ENCODE measurements at regions of chr19 and their contacts with region 1.

Region 1: DNA sequence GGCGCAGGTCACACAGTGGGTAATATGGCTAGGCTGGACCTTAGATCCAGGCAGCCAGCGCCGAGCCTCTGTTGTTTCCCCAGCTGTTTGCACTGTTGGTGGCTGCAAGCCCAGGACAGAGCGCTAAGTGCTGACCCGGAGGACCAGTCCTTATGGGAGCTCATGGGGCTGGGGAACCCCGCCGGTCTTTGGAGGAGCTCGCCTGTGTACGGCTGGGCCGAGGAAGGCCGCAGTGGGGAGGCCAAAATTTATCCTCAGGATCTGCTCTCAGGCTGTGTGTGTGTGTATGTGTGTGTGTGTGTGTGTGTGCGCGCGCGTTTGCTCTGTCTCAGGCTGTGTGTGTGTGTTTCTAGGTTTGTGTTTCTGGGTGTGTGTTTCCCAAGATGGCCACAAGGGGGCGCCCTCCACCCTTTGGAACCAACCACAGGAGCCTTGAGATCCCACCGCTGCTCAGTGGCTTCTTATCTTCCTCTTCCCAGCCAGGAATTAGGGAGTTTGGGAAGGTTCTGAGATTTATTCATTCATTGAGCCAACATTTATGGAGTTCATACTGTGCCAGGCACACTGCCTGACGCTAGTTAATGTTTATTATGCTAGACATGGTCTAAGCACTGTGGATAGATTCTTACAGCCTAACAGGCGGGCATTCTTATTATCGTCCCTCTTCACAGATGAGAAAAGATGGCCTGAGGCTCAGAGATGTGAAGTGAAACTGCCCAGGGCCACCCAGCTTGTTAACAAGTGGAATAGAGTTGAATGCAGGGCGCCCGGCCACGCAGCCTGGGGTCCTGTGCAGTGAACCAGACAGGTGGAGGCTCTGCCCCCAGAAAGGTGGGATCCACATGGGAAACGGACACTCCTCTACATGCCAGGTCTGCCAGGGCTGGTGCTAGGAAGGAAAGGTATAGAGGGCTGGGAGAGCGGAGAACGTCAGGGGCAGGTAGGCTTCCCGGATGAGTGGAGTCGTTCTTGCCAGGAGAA is 13.0 kb downstream of the PGLYRP1 start:
- DNase-seq: peak; percentile 52 to 61
- H3K4me3 ChIP-seq: no peak overlapping the region
- H3K27ac ChIP-seq: no peak overlapping the region
- H3K4me1 ChIP-seq: 0 out of 2 replicates have a peak, but pooled peaks cover 7% of the 10 kb centered on the region
- H3K27me3 ChIP-seq: no peaks in the 10 kb centered on the region
- CTCF ChIP-seq: peak; percentile 98

Region 2: GRCh38 chr19:45931055-45931454 is 78.8 kb before region 1 on chr19:
- CTCF ChIA-PET with region 1: interaction called, 11 read pairs
- POLR2A ChIA-PET with region 1: no interaction called
- intact Hi-C with region 1: no loop called
- DNase-seq: no peak
- H3K4me3 ChIP-seq: no peak overlapping the region
- H3K27ac ChIP-seq: no peak overlapping the region
- H3K4me1 ChIP-seq: 0 out of 2 replicates have a peak, but pooled peaks cover 4% of the 10 kb centered on the region
- H3K27me3 ChIP-seq: peaks cover 60% of the 10 kb centered on the region
- CTCF ChIP-seq: 0 out of 2 replicates have a peak, but pooled peaks have one; percentile 37

Region 3: DNA sequence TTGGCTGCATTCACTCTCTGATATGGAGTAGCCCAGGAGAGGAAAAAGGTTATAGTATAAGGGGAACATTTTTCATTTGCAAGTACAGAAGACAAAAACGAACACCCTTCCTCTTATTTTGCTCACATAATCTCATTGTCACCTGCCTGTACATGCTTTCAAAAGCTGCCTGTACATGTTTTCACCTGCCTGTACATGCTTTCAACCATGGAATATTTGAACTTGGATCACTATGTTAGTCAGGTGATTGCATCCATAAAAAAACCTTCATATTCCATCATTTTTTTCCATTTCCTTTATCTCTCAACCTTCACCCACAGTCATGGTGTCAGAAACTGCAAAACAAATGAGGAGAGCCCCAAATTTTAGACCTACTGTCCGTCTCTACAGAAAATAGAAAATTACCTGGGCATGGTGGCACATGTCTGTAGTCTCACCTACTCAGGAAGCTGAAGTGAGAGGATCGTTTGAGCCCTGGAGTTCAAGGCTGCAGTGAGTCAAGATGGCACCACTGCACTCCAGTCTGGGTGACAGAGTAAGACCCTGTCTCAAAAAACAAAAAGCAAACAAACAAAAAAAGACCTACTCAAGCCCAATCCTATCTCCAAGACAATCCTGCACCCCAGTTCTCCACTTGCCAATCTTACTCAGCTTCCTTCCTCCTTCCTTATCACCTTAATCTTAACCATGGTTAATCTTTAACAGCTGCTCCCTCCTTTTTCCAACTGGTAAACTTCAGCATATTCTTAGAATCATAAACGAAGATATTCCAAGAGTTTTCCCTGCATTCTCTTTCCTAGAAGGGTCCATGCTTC is 149.8 kb after region 1 on chr19:
- CTCF ChIA-PET with region 1: no interaction called
- POLR2A ChIA-PET with region 1: no interaction called
- intact Hi-C with region 1: no loop called
- DNase-seq: no peak
- H3K4me3 ChIP-seq: no peak overlapping the region
- H3K27ac ChIP-seq: no peak overlapping the region
- H3K4me1 ChIP-seq: no peaks in the 10 kb centered on the region
- H3K27me3 ChIP-seq: no peaks in the 10 kb centered on the region
- CTCF ChIP-seq: no peak

Measured in PC-9 (cell line).